ENCODE measurements at regions of chrX and their contacts with region 1.

Region 1: GRCh38 chrX:3651276-3651675 is 62.2 kb downstream of the PRKX start:
- DNase-seq: peak in 1 of 2 experiments; percentile 25
- ATAC-seq: no peak
- H3K4me3 ChIP-seq: no peak overlapping the region
- H3K27ac ChIP-seq: no peak overlapping the region
- H3K4me1 ChIP-seq: no peaks in the 10 kb centered on the region
- CTCF ChIP-seq: peak; percentile 57
- EP300 ChIP-seq: no peak
- POLR2A ChIP-seq: no peak
- RAD21 ChIP-seq: peak; percentile 56 to 60

Region 2: DNA sequence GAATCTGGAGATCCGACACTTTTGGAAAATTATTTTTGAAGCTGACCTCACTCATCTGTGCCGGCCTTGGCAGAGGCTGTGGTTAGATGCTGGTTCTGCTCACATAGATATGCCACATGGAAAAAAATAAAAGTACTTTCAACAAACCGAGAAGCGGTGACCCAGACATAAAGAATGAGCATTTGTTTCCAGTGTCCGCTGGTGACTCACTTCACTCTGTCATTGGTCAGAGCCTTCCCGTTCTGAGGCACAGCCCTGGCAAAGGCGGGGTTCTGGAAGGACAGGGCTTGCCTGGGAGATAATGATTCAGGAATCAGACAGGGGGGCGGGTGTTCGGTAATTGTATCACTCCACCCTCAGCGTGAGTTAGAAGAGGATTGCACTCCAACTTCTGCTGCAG is 132.4 kb before region 1 on chrX:
- CTCF ChIA-PET with region 1: no interaction called
- POLR2A ChIA-PET with region 1: no interaction called
- DNase-seq: peak; percentile 31 to 50
- ATAC-seq: peak; percentile 92 to 96
- H3K4me3 ChIP-seq: peak overlapping the region; percentile 23; the same call in 1 of the 3 replicates
- H3K27ac ChIP-seq: no peak overlapping the region
- H3K4me1 ChIP-seq: 0 out of 3 replicates have a peak, but pooled peaks cover 4% of the 10 kb centered on the region
- CTCF ChIP-seq: no peak
- EP300 ChIP-seq: no peak
- POLR2A ChIP-seq: no peak
- RAD21 ChIP-seq: no peak

Region 3: DNA sequence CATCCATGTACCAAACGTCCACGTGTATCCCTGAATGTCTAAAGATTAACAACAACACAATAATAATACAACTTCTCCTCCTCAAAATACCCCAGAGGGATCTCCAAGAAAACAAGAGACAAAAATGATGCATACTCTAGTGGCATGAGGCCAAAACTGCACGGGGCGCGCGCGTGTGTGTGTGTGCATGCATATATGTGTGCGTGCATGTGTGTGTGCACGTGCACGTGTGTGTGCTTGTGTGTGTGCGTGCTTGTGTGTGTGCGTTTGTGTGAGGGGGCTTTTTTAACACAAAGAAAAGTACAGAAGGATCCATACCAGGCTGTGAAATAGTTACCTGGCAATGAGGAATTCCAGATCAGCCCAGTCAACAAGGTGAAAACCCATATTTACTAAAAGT is 13.6 kb after region 1 on chrX:
- CTCF ChIA-PET with region 1: interaction called, 11 read pairs
- POLR2A ChIA-PET with region 1: no interaction called
- DNase-seq: no peak
- ATAC-seq: no peak
- H3K4me3 ChIP-seq: no peak overlapping the region
- H3K27ac ChIP-seq: no peak overlapping the region
- H3K4me1 ChIP-seq: no peaks in the 10 kb centered on the region
- CTCF ChIP-seq: no peak
- EP300 ChIP-seq: no peak
- POLR2A ChIP-seq: no peak
- RAD21 ChIP-seq: no peak

Region 4: DNA sequence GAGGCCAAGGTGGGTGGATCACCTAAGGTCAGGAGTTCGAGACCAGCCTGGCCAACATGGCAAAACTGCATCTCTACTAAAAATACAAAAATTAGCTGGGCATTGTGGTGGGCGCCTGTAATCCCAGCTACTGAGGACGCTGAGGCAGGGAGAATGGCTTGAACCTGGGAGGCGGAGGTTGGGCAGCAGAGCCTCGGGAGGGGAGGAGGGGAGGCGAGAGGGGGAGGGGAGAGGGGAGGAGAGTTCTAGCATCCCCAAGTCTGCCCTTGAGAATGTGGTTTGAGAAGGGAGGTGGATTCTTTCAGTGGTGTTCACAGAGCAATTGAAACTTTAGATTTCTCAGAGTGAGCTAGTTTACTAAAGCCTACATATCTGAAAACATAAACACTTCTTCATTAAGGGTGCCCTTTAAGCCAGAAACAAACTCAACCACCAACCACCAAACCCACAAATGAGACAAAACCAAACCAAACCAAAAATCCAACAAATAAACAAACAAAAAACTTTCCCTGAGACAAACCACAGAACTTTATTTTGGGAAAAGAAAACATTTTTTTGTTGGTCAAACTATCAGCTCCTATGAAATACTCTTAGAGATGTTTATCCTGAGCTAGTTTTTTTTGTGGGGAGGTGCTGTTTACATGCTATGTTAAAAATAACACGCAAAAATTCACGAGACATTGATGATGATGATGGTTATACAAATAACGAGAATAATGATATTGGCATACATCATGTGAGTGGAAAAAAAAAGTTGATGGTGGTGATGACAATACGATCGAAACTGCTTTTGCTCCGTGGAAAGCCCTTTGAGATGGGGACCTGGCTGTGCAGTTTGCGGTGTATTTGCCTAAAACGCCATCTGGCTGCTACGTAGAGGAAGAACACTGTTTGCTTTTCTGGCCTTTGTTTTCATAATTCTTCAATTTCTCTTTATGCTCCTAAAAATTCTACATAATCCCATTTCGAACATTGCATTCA is 160.3 kb after region 1 on chrX:
- CTCF ChIA-PET with region 1: interaction called, 11 read pairs
- POLR2A ChIA-PET with region 1: no interaction called
- DNase-seq: peak; percentile 40 to 48
- ATAC-seq: no peak
- H3K4me3 ChIP-seq: no peak overlapping the region
- H3K27ac ChIP-seq: no peak overlapping the region
- H3K4me1 ChIP-seq: peaks cover 6% of the 10 kb centered on the region; the same call in 2 of the 3 replicates
- CTCF ChIP-seq: peak; percentile 65
- EP300 ChIP-seq: no peak
- POLR2A ChIP-seq: no peak
- RAD21 ChIP-seq: peak; percentile 71 to 74

Measured in A549 (cell line).